ENCODE measurements at regions of chr5 and their contacts with region 1.

Region 1: DNA sequence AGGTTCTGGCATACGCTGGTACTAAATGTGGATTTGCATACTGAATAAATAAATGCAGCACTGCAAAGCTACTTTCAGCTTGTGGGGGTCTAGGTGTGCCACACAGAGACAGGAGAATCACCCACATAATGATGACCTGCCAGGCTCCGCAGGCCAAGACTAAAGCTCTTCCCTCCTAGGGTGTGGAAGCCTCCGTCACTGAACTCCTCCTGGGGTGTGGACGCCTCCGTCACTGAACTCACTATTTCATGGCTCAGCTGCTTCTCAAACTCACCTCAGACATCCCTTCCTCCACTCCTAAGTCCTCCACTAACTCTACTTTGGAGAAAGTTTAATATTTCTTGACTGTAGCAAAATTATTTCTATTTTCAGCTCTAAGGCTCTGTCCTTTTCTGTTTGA is 65.3 kb upstream of the GOLPH3 start:
- DNase-seq: no peak
- ATAC-seq: no peak
- H3K4me3 ChIP-seq: no peak overlapping the region
- H3K27ac ChIP-seq: no peak overlapping the region
- H3K4me1 ChIP-seq: peaks cover 28% of the 10 kb centered on the region
- H3K27me3 ChIP-seq: no peaks in the 10 kb centered on the region
- CTCF ChIP-seq: no peak
- EP300 ChIP-seq: no peak
- POLR2A ChIP-seq: no peak
- RAD21 ChIP-seq: no peak

Region 2: DNA sequence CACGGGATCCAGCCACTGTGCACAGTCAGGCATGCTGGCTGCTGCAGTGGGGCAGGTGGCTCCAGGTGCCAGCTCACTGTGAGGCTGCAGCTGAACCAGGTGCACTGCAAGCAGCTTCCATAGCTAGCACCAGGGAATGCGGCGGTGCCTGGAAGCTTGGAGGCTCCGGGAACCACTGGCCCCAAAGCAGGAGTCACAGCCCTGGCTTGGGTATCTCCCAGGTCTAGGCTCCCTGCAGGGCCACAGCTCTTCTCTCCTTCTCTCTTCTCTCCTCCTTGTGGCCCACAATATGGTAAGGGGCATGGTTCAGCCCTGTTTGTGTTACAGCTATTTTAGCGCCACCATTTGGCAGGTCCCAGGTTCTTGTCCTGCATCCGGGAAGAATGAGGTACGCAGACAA is 80.0 kb after region 1 on chr5:
- CTCF ChIA-PET with region 1: no interaction called
- POLR2A ChIA-PET with region 1: interaction called, 28 read pairs
- in situ Hi-C with region 1: loop called (anchors 5 kb)
- intact Hi-C with region 1: no loop called
- DNase-seq: peak; percentile 56
- ATAC-seq: peak; percentile 71
- H3K4me3 ChIP-seq: no peak overlapping the region
- H3K27ac ChIP-seq: no peak overlapping the region
- H3K4me1 ChIP-seq: peaks cover 43% of the 10 kb centered on the region
- H3K27me3 ChIP-seq: no peaks in the 10 kb centered on the region
- CTCF ChIP-seq: peak; percentile 70
- EP300 ChIP-seq: no peak
- POLR2A ChIP-seq: no peak
- RAD21 ChIP-seq: no peak